Adrenal gland (tissue), 19 donors: ENCODE measurements at regions of chr3 and their contacts with region 1.

Region 1: DNA sequence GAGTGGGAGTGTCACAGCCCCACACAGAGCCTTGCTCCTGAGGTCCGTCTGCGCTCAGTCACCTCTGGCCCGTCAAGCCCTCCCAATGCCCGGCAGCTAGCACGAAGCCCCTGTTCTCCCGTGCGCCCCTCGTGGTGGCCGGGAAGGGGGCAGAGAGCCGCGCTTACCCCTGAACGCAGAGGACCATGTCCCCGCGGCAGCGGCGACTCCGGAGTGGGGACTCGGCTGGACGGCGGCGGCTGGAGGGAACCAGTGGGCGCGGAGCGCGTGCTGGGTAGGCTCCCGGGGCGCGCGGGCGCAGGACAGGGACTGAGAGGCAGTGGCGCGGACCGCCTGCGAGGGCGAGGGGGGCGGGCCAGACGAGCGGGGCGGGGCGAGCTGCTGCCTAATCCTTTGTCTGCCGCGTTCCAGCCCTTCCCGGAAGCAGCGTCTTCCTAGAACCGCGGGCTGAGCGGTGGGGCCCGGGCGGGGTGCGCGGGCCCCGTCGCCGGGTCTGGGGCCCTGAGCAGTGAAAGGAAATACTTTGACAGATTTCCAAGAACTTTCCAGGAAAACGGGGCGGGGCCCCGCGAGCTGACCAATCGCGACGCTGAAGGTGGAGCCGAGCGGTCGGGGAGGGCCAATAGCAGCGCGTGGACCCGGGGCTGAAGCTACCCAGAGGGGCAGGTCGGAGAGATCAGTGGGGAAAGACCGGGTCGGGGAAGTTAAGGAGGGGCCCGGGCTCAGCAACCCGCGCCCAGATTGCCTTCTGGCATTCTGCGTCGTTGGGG is at the start of gene CISH:
- DNase-seq: peak; percentile 95 to 97 (median 96)
- H3K4me3 ChIP-seq: peak within 1 kb of the TSS; percentile 10 to 79 (median 44)
- H3K27ac ChIP-seq: peak within 1 kb of the TSS in 4 of 5 donors; percentile 43 to 83 (median 78)
- H3K4me1 ChIP-seq: peaks cover 7 to 36% of the 10 kb centered on the region in 2 donors
- H3K27me3 ChIP-seq: no peaks in the 10 kb centered on the region
- CTCF ChIP-seq: peak in 5 of 6 experiments; percentile 13 to 45 (median 17)
- POLR2A ChIP-seq: peak; percentile 62 to 69
- total RNA-seq, gene CISH: 2.3 to 12.6 (median 5.2) TPM

Region 2: DNA sequence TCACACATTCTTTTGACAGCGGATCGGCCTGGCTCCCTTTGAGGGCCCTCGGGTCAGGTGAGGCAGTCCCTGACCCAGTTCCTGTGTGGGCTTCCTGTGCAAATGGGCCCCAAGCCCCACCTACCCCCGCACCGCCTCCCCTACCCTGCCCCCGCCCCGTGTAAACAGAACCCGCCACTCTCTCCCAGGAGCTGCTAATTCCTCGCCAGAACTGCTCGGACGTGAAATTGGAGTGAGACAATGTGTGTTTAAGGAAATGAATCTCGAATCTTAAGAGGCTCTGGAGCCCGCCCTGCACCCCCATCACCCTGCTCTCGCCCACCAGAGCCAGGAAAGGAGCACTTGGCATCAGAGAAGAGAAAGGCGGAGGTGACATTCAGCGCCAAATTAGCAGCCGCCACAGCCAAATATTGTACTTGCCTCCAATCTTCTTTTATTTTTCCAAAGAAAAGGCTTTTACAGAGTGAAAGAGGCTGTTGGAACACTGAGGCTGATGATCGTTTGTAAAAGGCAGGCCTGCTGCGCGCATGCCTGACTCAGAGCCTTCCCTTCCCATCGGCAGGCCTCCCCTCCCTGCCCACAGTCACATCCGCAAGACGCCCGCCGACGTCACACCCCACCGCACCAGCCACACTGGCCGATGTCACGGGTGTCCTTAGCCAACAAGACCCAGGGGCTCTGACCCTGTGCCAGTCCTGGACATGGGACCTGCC is 161.3 kb before region 1 on chr3:
- intact Hi-C with region 1: no loop called
- DNase-seq: peak; percentile 22 to 78 (median 48)
- H3K4me3 ChIP-seq: peak overlapping the region in 1 of 4 donors; percentile 19
- H3K27ac ChIP-seq: peak overlapping the region in 1 of 5 donors; percentile 69
- H3K4me1 ChIP-seq: no peaks in the 10 kb centered on the region
- H3K27me3 ChIP-seq: no peaks in the 10 kb centered on the region
- CTCF ChIP-seq: no peak
- POLR2A ChIP-seq: no peak

Region 3: GRCh38 chr3:50519471-50520089 is 92.1 kb before region 1 on chr3:
- intact Hi-C with region 1: loop called in 1 of 2 experiments (anchors 5 kb)
- DNase-seq: peak; percentile 56 to 77 (median 63)
- H3K4me3 ChIP-seq: no peak overlapping the region
- H3K27ac ChIP-seq: no peak overlapping the region
- H3K4me1 ChIP-seq: no peaks in the 10 kb centered on the region
- H3K27me3 ChIP-seq: peaks cover 2% of the 10 kb centered on the region
- CTCF ChIP-seq: peak; percentile 75 to 83 (median 78)
- POLR2A ChIP-seq: no peak

Region 4: DNA sequence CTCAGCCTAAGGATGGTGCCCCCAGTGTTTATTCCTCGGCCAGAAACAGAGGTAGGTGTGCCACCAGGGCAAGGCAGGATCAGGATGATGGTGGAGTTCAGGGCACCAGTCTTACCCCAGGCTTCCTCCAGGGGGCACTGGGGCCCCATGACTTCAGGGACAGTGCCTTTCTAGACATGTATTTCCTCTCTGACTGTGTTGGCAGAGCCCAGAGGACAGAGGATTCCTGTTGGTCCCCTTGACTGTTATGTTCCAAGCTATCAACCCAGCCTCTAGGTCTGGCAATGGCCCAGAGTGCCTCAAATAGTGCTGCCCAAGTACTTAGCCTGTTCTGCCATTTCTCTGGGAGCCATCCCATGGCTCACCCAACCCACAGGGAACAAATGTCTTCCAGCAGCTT is 39.5 kb before region 1 on chr3:
- intact Hi-C with region 1: loop called (anchors 2 kb)
- DNase-seq: peak; percentile 69 to 89 (median 79)
- H3K4me3 ChIP-seq: no peak overlapping the region
- H3K27ac ChIP-seq: no peak overlapping the region
- H3K4me1 ChIP-seq: peaks cover 12 to 21% of the 10 kb centered on the region in 2 donors
- H3K27me3 ChIP-seq: no peaks in the 10 kb centered on the region
- CTCF ChIP-seq: peak; percentile 67 to 97 (median 94)
- POLR2A ChIP-seq: no peak

Region 5: DNA sequence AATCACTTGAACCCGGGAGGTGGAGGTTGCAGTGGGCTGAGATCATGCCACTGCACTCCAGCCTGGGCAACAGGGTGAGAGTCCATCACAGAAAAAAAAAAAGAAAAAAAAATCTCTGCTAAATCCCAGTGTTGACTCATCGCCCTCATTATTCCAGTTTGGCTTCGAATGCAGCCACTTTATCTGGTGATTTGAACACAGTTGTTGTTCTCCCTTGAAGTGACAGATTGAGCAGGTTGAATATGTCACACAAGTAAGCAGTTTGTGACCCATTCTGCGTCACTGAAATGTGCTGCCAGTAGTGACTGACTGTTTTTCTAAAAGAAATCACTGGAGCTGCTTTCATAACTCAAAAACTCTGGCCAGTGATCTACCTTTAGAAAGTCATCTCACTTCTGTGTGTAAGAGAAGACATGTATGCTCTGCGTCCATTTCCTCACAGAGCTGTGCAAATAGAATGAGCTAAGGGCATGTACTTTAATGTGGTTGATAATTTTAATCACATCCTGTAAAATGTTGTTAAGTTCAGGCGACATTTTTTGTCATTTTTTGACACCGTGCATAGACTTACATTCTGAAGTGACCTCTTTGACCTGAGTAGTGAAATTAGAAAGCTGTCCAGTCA is 75.6 kb after region 1 on chr3:
- intact Hi-C with region 1: no loop called
- DNase-seq: peak in 1 of 7 donors; percentile 30
- H3K4me3 ChIP-seq: no peak overlapping the region
- H3K27ac ChIP-seq: no peak overlapping the region
- H3K4me1 ChIP-seq: no peaks in the 10 kb centered on the region
- H3K27me3 ChIP-seq: no peaks in the 10 kb centered on the region
- CTCF ChIP-seq: no peak
- POLR2A ChIP-seq: no peak

Region 6: DNA sequence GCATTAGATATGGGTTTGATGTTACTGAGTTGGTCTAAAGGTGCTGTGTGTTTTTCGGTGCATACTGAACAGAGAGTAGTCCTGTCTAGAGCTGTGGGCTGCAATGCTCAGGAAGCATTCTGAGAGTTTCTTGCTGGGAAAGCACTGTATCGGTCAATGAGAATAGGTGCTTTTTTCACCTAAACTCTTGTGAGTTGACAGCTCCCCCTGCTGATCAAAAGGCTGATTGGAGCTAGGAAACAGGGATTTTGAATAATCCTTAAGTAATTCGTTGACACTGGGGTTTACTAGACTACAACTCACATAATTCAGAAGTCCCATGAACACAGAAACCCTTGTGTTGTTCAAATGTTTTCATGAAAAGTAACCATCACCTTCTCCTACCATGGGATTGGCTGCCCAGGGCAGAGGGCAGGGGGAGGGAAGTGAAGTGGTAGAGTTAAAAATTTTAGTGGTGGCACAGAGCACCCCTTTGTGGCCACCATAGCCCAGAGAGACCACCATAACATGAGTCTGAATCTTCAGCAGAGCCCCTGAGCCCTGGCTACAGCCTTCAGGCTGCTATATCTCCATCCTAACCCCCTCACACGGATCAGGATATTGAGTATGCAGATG is 760.4 kb after region 1 on chr3:
- intact Hi-C with region 1: loop called (anchors 5 to 10 kb)
- DNase-seq: peak; percentile 57 to 87 (median 76)
- H3K4me3 ChIP-seq: no peak overlapping the region
- H3K27ac ChIP-seq: no peak overlapping the region
- H3K4me1 ChIP-seq: peaks cover 7 to 9% of the 10 kb centered on the region in 2 donors
- H3K27me3 ChIP-seq: no peaks in the 10 kb centered on the region
- CTCF ChIP-seq: peak; percentile 41 to 80 (median 78)
- POLR2A ChIP-seq: no peak